Esophagus squamous epithelium (tissue), 5 donors: ENCODE measurements at regions of chr10 and their contacts with region 1.

Region 1: DNA sequence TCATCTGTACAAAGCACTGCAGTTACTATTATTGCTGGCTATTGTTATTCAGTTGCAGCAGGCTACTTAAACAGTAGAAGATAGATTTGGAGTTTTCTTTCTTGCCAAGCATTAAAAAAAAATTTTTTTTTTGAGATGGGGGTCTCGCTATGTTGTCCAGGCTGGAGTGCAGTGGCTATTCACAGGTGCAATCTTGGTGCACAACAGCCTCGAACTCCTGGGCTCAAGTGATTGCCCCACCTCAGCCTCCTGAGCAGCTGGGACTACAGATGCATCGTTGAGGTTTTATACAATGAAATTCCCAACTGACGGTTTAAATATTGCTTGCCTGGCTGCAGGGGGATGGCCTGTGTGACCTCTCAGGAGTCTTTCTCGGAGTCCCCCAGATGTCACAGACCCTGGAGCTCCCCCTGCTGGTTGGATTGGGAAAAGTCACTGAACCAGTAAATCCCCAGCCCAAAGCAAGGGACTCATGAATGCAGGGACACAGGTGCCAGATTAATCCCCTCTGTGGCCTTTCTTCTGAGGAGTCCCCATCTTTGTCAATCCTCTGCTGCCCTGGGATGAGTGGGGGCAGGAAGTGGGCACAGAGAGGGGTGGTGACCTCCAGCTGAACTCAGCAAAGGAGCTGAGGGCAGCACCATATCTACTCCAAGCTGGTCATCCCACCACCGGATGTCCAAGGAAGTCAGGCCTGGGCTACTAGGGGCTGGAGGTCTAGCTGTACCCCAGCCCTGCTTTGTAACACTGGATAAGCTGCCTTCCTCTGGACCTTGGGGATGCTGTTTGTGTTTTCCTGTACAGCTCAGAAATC is 149.6 kb downstream of the C10orf105 start:
- DNase-seq: no peak
- H3K4me3 ChIP-seq: no peak overlapping the region
- H3K27ac ChIP-seq: no peak overlapping the region
- H3K4me1 ChIP-seq: peaks cover 0 to 4% (median 0%) of the 10 kb centered on the region in 3 donors
- H3K27me3 ChIP-seq: no peaks in the 10 kb centered on the region
- CTCF ChIP-seq: peak; percentile 71 to 88 (median 83)
- POLR2A ChIP-seq: no peak

Region 2: DNA sequence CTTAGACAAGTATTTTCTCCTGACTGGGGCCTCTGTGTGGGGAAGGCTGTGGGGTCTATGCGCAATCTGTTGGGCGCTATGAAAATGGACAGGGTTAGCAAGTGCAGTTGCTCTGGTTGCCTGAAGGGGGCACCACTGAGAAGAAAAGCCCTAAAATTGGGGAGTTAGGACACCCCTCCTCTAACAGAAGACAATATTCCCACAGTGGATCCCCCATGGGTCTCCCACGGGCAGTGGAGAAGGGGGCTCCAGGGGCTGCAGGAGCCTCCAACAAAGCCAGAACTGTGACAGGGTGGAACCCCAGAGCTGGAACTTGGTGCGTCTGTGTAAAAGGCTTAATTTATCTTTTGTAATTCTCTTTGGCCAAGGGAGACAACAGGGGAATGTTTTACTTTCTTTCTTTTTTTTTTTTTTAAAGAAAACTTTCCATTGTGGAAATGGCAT is 1780.8 kb before region 1 on chr10:
- intact Hi-C with region 1: no loop called
- DNase-seq: no peak
- H3K4me3 ChIP-seq: no peak overlapping the region
- H3K27ac ChIP-seq: no peak overlapping the region
- H3K4me1 ChIP-seq: peaks cover 0 to 5% (median 0%) of the 10 kb centered on the region in 3 donors
- H3K27me3 ChIP-seq: peaks cover 0 to 14% (median 0%) of the 10 kb centered on the region in 4 donors
- CTCF ChIP-seq: peak in 5 of 6 experiments; percentile 14 to 66 (median 41)
- POLR2A ChIP-seq: no peak

Region 3: DNA sequence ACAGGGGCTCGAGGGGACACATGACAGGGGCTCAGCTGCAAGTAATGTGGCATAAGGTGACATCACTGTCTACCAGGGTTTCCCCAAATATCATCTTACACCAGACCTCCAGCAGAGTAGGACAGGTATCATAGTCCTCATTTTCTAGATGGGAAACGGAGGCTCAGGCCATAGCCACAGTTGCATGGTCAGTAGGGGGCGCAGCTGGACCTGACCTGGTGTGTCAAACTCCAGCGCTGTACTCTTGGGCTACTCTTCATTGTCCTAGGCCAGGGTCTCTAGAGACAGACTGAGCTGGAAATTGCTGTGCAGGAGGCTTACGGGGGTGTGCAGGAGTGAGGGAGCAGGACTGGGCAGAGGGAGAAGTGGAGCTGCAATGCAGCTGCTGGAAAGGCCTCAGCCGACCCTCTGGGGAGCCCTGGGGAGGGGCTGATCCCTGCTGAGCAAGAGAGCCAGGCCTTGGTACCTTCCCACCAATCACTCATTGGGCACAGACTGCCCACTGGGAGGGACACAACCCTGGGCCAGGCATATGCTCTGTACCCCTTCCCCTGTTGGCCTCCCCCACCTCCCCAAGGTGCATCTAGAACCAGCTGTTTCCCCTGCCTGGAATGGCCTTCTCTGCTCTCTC is 83.4 kb before region 1 on chr10:
- intact Hi-C with region 1: loop called (anchors 5 kb)
- DNase-seq: no peak
- H3K4me3 ChIP-seq: no peak overlapping the region
- H3K27ac ChIP-seq: no peak overlapping the region
- H3K4me1 ChIP-seq: no peaks in the 10 kb centered on the region
- H3K27me3 ChIP-seq: peaks cover 0 to under 1% (median 0%) of the 10 kb centered on the region in 4 donors
- CTCF ChIP-seq: peak in 5 of 6 experiments; percentile 38 to 64 (median 44)
- POLR2A ChIP-seq: no peak